Dorsolateral prefrontal cortex (tissue), 120 donors: ENCODE measurements at regions of chr3 and their contacts with region 1.

Region 1: DNA sequence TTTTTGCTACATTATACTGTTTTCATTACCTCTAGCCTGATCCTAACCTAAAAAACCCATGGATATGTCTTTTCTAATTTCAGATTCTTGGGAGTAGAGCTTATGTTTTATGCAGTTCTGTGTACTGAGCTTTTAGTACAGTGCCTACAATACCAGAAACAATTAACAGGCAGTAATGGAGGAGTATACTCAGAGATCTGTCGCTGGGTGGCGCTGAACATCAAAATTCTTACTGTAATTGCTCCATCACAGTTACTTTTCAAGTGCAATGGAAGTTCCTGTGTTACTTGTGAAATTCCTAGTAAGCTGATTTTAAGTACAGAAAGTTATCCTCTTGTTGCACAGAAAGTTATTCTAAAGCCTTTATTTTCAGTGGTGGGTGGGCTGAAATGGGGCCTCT is 66.9 kb downstream of the RNF13 start:
- DNase-seq: peak in 8 of 10 donors; percentile 24 to 84 (median 65)
- H3K4me3 ChIP-seq: no peak overlapping the region
- H3K27ac ChIP-seq: peak overlapping the region in 9 of 59 donors; percentile 1 to 53 (median 35)
- H3K27me3 ChIP-seq: no peaks in the 10 kb centered on the region
- CTCF ChIP-seq: peak; percentile 36 to 82 (median 64)

Region 2: DNA sequence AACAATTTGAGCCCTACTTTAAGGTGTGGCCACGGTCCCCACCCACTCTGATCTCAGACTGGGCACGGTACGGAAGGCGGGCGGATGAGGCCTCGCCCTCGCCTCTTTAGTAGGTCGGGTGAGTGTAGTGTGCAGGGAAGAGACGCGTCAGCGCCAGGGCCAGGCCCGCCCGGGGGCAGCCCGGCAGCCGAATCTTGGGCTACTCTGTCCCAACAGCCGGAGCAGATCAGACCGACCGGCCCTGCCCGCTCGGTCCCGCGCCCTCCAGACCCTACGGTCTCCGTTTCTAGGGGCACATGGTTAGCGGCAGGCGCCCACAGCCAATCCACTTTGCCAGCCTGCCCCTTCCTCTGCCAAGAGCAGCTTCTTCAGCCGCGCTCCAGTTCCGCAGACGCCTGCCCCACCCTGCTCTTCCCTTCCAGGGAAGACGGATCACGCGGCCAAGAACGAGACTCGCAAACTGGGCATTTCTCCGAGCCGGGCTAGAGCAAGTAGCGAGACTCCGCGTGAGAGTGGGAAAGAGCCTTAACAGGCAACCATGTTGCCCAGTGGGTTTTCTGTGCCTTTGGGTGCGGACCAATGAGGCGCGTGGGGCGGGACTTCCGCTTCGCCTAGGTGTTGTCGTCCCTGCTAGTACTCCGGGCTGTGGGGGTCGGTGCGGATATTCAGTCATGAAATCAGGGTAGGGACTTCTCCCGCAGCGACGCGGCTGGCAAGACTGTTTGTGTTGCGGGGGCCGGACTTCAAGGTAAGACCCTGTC is 67.1 kb before region 1 on chr3 and contains the start of gene RNF13:
- intact Hi-C with region 1: loop called in 1 of 2 experiments (anchors 10 kb)
- DNase-seq: peak; percentile 98 to 100 (median 99)
- H3K4me3 ChIP-seq: peak within 1 kb of the TSS; percentile 53 to 96 (median 88)
- H3K27ac ChIP-seq: peak within 1 kb of the TSS; percentile 95 to 100 (median 99)
- H3K27me3 ChIP-seq: no peaks in the 10 kb centered on the region
- CTCF ChIP-seq: peak in 7 of 56 donors; percentile 6 to 38 (median 13)
- total RNA-seq, gene RNF13: 80.2 to 336 (median 136) TPM

Region 3: GRCh38 chr3:150183678-150184425 is 304.0 kb after region 1 on chr3:
- intact Hi-C with region 1: loop called (anchors 5 to 10 kb)
- DNase-seq: peak; percentile 55 to 82 (median 78)
- H3K4me3 ChIP-seq: peak overlapping the region; percentile 23 to 68 (median 51)
- H3K27ac ChIP-seq: peak overlapping the region in 41 of 59 donors; percentile 5 to 86 (median 53)
- H3K27me3 ChIP-seq: no peaks in the 10 kb centered on the region
- CTCF ChIP-seq: peak; percentile 43 to 94 (median 82)